Dendritic cell treated with granulocyte-macrophage colony-stimulating factor and Interleukin-4, amounts not matched to agents 40 ng/mL and 50 ng/mL, for 4 days (primary cell): ENCODE measurements at regions of chr13 and their contacts with region 1.

Region 1: DNA sequence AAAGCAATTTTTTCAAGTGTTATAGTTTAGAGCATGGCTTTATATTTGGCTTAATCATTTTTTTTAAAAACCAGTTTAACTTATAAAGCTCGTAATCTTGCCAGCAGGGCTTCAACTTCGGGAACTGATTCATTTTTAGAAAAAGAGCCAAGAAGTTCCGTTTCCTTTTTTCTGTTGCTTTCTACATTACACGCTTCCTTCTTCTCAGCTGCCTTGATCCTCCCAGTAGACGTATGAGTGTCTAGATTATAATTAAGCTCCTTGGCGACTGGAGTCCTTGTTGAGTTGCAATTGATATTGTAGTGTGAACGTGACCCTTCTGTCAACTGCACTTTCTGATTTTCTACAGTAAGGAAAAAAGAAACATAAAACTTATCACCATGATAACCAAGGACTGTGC is 497.2 kb downstream of the DIAPH3 start:
- H3K4me3 Mint-ChIP-seq: no peak overlapping the region
- H3K27ac Mint-ChIP-seq: peak overlapping the region; percentile 25
- H3K4me1 Mint-ChIP-seq: peaks cover 14% of the 10 kb centered on the region
- H3K27me3 Mint-ChIP-seq: peaks cover 2% of the 10 kb centered on the region

Region 2: DNA sequence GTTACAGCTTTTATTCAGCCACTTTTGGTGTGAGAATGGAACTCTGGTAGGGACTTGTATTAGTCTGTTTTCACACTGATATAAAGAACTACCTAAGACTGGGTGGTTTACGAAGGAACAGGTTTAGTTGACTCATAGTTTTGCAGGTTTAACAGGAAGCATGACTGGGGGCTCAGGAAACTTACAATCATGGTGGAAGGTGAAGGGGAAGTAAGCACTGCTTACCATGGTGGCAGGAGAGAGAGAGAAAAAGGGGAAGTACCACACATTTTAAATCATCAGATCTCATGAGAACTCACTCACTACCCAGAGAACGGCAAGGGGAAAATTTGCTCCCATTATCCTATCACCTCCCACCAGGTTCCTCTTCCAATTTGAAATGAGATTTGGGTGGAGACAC is 1092.8 kb before region 1 on chr13:
- intact Hi-C with region 1: no loop called
- H3K4me3 Mint-ChIP-seq: no peak overlapping the region
- H3K27ac Mint-ChIP-seq: no peak overlapping the region
- H3K4me1 Mint-ChIP-seq: peaks cover 13% of the 10 kb centered on the region
- H3K27me3 Mint-ChIP-seq: no peaks in the 10 kb centered on the region

Region 3: GRCh38 chr13:59458908-59459579 is 207.5 kb before region 1 on chr13:
- intact Hi-C with region 1: loop called (anchors 5 kb)
- H3K4me3 Mint-ChIP-seq: peak overlapping the region; percentile 33
- H3K27ac Mint-ChIP-seq: peak overlapping the region; percentile 85
- H3K4me1 Mint-ChIP-seq: peaks cover 18% of the 10 kb centered on the region
- H3K27me3 Mint-ChIP-seq: no peaks in the 10 kb centered on the region